ENCODE measurements at regions of chr1 and their contacts with region 1.

Region 1: DNA sequence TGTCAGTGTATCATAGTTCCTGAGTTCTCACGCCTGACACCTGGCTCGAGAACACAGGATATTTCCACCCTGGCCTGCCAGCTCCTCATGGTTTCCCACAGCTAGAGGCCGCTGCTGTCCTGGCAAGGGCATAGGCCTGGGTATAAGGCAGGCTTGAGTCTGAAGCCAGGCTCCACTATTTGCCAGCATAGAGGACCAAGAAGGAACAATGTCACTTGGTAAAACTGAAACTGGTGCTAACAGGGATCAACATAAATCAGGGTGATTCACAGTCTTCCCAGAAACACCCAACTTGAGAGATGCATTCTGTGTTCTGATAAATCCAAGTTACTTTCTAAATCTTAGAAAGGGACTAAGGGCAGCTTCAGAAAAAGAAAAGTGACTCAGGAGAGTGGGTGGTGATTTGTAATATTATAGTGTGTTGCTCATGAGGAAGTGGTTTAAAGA is 6.9 kb upstream of the S100A2 start:
- DNase-seq: peak; percentile 85
- H3K4me3 Mint-ChIP-seq: no peak overlapping the region
- H3K27ac Mint-ChIP-seq: peak overlapping the region; percentile 18
- H3K4me1 Mint-ChIP-seq: peaks cover 40% of the 10 kb centered on the region
- H3K27me3 Mint-ChIP-seq: peaks cover 1% of the 10 kb centered on the region

Region 2: GRCh38 chr1:152926091-152926490 is 646.5 kb before region 1 on chr1:
- CTCF ChIA-PET with region 1: no interaction called
- intact Hi-C with region 1: no loop called
- DNase-seq: no peak
- H3K4me3 Mint-ChIP-seq: no peak overlapping the region
- H3K27ac Mint-ChIP-seq: no peak overlapping the region
- H3K4me1 Mint-ChIP-seq: no peaks in the 10 kb centered on the region
- H3K27me3 Mint-ChIP-seq: peaks cover 13% of the 10 kb centered on the region

Region 3: GRCh38 chr1:153344531-153344981 is 228.0 kb before region 1 on chr1:
- CTCF ChIA-PET with region 1: no interaction called
- intact Hi-C with region 1: loop called (anchors 2 kb)
- DNase-seq: no peak
- H3K4me3 Mint-ChIP-seq: no peak overlapping the region
- H3K27ac Mint-ChIP-seq: no peak overlapping the region
- H3K4me1 Mint-ChIP-seq: peaks cover 39% of the 10 kb centered on the region
- H3K27me3 Mint-ChIP-seq: peaks cover 14% of the 10 kb centered on the region

Region 4: GRCh38 chr1:153525088-153525728 is 47.4 kb before region 1 on chr1:
- CTCF ChIA-PET with region 1: interaction called, 10 read pairs
- intact Hi-C with region 1: no loop called
- DNase-seq: no peak
- H3K4me3 Mint-ChIP-seq: no peak overlapping the region
- H3K27ac Mint-ChIP-seq: no peak overlapping the region
- H3K4me1 Mint-ChIP-seq: peaks cover 2% of the 10 kb centered on the region
- H3K27me3 Mint-ChIP-seq: no peaks in the 10 kb centered on the region

Region 5: DNA sequence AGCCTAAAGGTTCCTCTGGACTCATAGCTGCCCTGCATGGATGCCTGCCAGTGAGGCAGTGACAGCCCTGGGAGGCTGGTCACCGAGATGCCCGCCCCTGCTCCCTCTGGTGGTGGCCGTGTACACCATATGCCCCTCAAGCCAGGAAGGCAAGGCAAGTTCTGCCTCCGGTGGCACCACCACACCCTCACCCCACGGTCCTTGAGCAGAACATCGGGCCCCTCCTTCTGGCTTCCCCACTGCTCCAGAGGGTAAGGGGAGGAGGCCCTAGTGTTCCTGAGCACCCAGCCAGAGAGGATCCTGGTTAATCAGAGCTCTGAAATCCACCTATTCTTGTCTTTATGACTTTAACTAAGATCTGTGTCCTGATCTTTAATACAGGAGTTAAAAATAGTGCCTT is 45.1 kb after region 1 on chr1:
- CTCF ChIA-PET with region 1: interaction called, 12 read pairs
- intact Hi-C with region 1: loop called (anchors 1 kb)
- DNase-seq: peak; percentile 72
- H3K4me3 Mint-ChIP-seq: no peak overlapping the region
- H3K27ac Mint-ChIP-seq: no peak overlapping the region
- H3K4me1 Mint-ChIP-seq: peaks cover 1% of the 10 kb centered on the region
- H3K27me3 Mint-ChIP-seq: no peaks in the 10 kb centered on the region

Region 6: DNA sequence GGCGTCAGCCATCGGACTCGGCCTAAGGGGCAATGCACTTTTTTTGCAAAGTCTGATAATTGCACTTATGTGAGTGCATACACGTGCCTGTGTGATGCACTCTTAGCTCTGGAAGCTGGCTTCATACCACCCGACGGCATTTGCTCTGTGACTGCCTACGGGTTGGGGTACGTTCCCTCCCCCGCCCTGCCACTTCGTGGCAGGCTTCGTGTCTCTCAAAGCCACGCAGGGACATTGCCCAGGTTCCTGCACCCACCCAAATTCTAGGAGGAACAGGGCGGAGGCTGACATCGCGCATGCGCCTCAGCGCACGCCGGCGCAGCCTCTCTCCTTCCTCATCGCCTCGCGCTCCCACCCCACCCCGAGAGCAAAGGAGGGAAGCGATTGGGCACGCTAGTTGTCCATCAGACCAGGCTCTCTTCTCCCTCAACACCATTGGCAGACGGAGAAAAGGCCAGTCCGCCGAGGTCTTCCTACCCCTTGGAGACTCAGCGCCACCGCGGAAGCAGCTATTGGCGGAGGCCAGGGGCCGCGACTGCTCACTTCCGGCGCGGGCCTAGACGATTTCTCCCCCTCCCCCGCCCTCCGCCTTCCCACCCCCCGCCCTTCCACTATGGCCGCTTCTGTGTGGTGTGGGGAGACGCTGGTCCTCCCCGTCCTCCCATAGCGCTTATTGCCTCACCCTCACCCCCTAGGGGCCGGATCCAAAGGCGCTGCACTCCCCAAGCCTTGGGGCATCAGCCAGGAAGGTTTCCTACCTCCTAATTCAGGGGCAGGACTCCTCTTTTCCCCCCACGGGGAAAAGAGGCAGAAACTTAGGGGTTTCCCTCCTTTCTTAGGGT is 155.1 kb after region 1 on chr1 and contains the start of gene INTS3:
- CTCF ChIA-PET with region 1: no interaction called
- intact Hi-C with region 1: loop called (anchors 5 kb)
- DNase-seq: peak; percentile 100
- H3K4me3 Mint-ChIP-seq: peak within 1 kb of the TSS; percentile 97
- H3K27ac Mint-ChIP-seq: peak within 1 kb of the TSS; percentile 95
- H3K4me1 Mint-ChIP-seq: peaks cover 39% of the 10 kb centered on the region
- H3K27me3 Mint-ChIP-seq: no peaks in the 10 kb centered on the region
- total RNA-seq, gene INTS3: 39.3 to 40.4 TPM

Region 7: DNA sequence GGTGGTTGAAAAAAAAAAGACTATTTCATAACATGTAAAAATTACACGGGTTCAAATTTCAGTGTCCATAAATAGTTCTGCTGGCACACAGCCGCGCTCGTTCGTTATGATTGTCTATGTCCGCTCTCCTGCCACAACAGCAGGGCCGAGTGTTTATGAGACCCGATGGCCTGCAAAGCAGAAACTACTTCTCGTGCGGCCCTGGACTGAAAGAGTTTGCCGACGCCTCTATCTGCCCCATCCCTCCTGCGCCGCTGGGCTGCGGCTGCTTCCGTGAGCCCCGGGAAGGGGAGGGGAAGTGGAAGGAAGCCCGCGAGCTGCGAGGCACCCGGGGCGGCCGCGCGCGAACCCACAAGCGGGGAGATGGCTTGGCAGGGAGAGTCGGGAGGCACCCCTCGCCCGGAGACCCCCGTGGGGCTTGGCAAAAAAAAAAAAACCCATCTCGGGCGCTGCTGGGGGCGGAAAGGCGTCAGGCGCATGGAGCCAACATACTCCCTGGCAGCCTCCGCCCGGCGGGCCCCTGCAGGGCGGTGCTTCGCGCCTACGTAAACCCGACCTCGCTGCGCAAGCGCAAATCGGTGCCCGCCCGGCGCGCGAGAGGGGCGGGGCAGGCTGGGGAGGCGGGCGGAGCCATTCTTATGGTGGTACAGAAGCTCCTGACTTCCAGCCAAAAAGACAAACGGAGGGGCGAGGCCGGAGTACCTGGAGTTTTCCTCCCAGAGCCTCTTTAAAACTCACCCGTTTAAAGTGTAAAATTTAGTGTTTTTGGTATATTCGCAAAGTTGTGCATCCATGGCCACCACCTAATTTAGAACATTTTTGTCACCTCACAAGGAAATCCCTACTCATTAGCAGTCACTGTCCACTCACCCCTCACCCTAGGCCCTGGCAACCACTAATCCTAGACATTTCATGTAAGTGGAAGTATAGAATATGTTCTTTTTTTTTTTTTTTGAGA is 210.9 kb after region 1 on chr1:
- CTCF ChIA-PET with region 1: interaction called, 3 read pairs
- intact Hi-C with region 1: loop called (anchors 2 kb)
- DNase-seq: peak; percentile 93
- H3K4me3 Mint-ChIP-seq: peak overlapping the region; percentile 95
- H3K27ac Mint-ChIP-seq: peak overlapping the region; percentile 92
- H3K4me1 Mint-ChIP-seq: peaks cover 5% of the 10 kb centered on the region
- H3K27me3 Mint-ChIP-seq: no peaks in the 10 kb centered on the region

Region 8: GRCh38 chr1:153888533-153888932 is 315.9 kb after region 1 on chr1:
- CTCF ChIA-PET with region 1: no interaction called
- intact Hi-C with region 1: no loop called
- DNase-seq: no peak
- H3K4me3 Mint-ChIP-seq: peak overlapping the region; percentile 13
- H3K27ac Mint-ChIP-seq: peak overlapping the region; percentile 53
- H3K4me1 Mint-ChIP-seq: peaks cover 45% of the 10 kb centered on the region
- H3K27me3 Mint-ChIP-seq: no peaks in the 10 kb centered on the region